Panc1 (cell line): ENCODE measurements at regions of chr2 and their contacts with region 1.

Region 1: DNA sequence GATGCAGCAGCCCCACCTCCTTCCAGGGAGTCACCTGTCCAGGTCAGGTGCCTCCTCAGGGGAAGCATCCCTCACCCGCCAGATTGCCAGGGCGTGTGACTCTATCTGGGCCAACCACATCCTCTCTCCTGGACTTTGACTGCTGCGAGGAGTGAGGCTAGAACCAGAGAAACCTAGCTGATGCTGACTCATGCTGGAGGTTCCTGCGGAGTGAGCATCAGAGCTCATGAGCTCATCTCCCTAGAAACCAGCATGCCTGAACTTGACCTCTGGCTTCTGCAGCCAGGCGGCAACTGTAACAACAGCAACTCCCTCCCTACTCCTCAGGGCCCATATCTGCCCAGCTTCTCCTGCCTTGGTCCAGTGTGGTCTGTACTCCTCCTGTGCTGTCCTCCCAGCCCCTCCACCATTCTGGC is 28.3 kb upstream of the NT5DC4 start:
- DNase-seq: peak; percentile 90
- ATAC-seq: peak; percentile 78
- H3K4me3 ChIP-seq: no peak overlapping the region
- H3K27ac ChIP-seq: peak overlapping the region; percentile 45; the same call in 1 of the 2 replicates
- H3K4me1 ChIP-seq: peaks cover 23% of the 10 kb centered on the region
- H3K27me3 ChIP-seq: no peaks in the 10 kb centered on the region
- CTCF ChIP-seq: no peak

Region 2: DNA sequence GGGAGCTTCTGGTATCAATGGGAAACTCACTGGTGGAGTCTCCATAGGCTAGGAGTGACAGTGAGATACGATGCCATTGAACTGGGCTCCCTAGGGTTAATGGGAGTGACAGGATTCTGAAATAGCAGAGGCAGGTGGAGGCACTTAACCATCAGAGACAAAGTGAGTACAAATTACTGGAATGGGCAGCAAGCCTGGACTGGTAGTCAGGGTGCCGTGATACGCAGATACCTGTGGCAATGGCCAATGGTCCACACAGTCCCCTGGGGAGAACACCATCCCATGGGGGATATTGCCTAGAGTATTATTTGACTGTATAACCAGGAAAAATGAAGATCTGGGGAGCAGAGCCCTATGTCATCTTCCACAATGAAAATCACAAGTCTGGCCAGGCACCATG is 90.8 kb before region 1 on chr2:
- CTCF ChIA-PET with region 1: interaction called, 5 read pairs
- POLR2A ChIA-PET with region 1: no interaction called
- in situ Hi-C with region 1: no loop called
- intact Hi-C with region 1: loop called (anchors 1 kb)
- DNase-seq: no peak
- ATAC-seq: no peak
- H3K4me3 ChIP-seq: no peak overlapping the region
- H3K27ac ChIP-seq: no peak overlapping the region
- H3K4me1 ChIP-seq: no peaks in the 10 kb centered on the region
- H3K27me3 ChIP-seq: no peaks in the 10 kb centered on the region
- CTCF ChIP-seq: no peak

Region 3: GRCh38 chr2:112636961-112637660 is 55.4 kb before region 1 on chr2:
- CTCF ChIA-PET with region 1: no interaction called
- POLR2A ChIA-PET with region 1: interaction called, 11 read pairs
- in situ Hi-C with region 1: no loop called
- intact Hi-C with region 1: no loop called
- DNase-seq: no peak
- ATAC-seq: no peak
- H3K4me3 ChIP-seq: no peak overlapping the region
- H3K27ac ChIP-seq: no peak overlapping the region
- H3K4me1 ChIP-seq: 0 out of 2 replicates have a peak, but pooled peaks cover 4% of the 10 kb centered on the region
- H3K27me3 ChIP-seq: no peaks in the 10 kb centered on the region
- CTCF ChIP-seq: no peak

Region 4: GRCh38 chr2:112996635-112997034 is 304.1 kb after region 1 on chr2:
- CTCF ChIA-PET with region 1: no interaction called
- POLR2A ChIA-PET with region 1: no interaction called
- in situ Hi-C with region 1: no loop called
- intact Hi-C with region 1: no loop called
- DNase-seq: no peak
- ATAC-seq: no peak
- H3K4me3 ChIP-seq: no peak overlapping the region
- H3K27ac ChIP-seq: no peak overlapping the region
- H3K4me1 ChIP-seq: no peaks in the 10 kb centered on the region
- H3K27me3 ChIP-seq: no peaks in the 10 kb centered on the region
- CTCF ChIP-seq: no peak